MCF 10A (cell line): ENCODE measurements at regions of chr1 and their contacts with region 1.

Region 1: GRCh38 chr1:244272471-244273261 is 179.0 kb downstream of the ADSS2 start:
- DNase-seq: peak; percentile 97
- H3K4me3 Mint-ChIP-seq: peak overlapping the region; percentile 65
- H3K27ac Mint-ChIP-seq: peak overlapping the region; percentile 52
- H3K4me1 Mint-ChIP-seq: peaks cover 32% of the 10 kb centered on the region
- H3K27me3 Mint-ChIP-seq: no peaks in the 10 kb centered on the region
- CTCF ChIP-seq: peak; percentile 100

Region 2: GRCh38 chr1:243343970-243344937 is 928.4 kb before region 1 on chr1:
- CTCF ChIA-PET with region 1: interaction called, 86 read pairs
- POLR2A ChIA-PET with region 1: interaction called, 5 read pairs
- intact Hi-C with region 1: loop called (anchors 1 kb)
- DNase-seq: peak; percentile 79
- H3K4me3 Mint-ChIP-seq: no peak overlapping the region
- H3K27ac Mint-ChIP-seq: no peak overlapping the region
- H3K4me1 Mint-ChIP-seq: peaks cover 5% of the 10 kb centered on the region
- H3K27me3 Mint-ChIP-seq: no peaks in the 10 kb centered on the region
- CTCF ChIP-seq: peak; percentile 91

Region 3: GRCh38 chr1:243713470-243714186 is 559.0 kb before region 1 on chr1:
- CTCF ChIA-PET with region 1: interaction called, 75 read pairs
- POLR2A ChIA-PET with region 1: interaction called, 4 read pairs
- intact Hi-C with region 1: loop called (anchors 1 kb)
- DNase-seq: no peak
- H3K4me3 Mint-ChIP-seq: no peak overlapping the region
- H3K27ac Mint-ChIP-seq: no peak overlapping the region
- H3K4me1 Mint-ChIP-seq: peaks cover 6% of the 10 kb centered on the region
- H3K27me3 Mint-ChIP-seq: no peaks in the 10 kb centered on the region
- CTCF ChIP-seq: no peak

Region 4: GRCh38 chr1:243850452-243851256 is 422.0 kb before region 1 on chr1:
- CTCF ChIA-PET with region 1: interaction called, 6 read pairs
- POLR2A ChIA-PET with region 1: interaction called, 6 read pairs
- intact Hi-C with region 1: loop called (anchors 1 kb)
- DNase-seq: peak; percentile 85
- H3K4me3 Mint-ChIP-seq: peak overlapping the region; percentile 88
- H3K27ac Mint-ChIP-seq: peak overlapping the region; percentile 46
- H3K4me1 Mint-ChIP-seq: peaks cover 20% of the 10 kb centered on the region
- H3K27me3 Mint-ChIP-seq: peaks cover 64% of the 10 kb centered on the region
- CTCF ChIP-seq: no peak

Region 5: DNA sequence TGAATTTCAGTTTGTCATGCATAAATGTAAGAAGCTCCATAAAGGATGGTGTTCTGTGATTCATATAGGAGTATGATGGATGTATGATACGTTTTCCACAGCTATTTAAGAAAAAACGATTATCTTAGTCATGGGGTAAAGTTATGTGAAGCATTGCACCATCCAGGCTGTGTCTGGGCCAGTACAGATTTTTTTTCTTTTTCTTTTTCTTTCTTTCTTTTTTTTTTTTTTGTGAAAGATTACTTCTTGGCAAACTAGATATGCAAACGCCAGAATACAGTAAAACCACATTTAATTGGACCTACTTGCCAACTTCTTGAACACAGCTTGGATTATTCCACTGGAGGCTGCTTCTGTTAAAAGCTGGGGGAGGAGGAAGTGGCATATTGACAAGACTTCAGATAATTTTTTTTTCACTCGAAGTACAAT is 206.7 kb before region 1 on chr1:
- CTCF ChIA-PET with region 1: interaction called, 10 read pairs
- POLR2A ChIA-PET with region 1: no interaction called
- intact Hi-C with region 1: no loop called
- DNase-seq: peak; percentile 45
- H3K4me3 Mint-ChIP-seq: no peak overlapping the region
- H3K27ac Mint-ChIP-seq: no peak overlapping the region
- H3K4me1 Mint-ChIP-seq: peaks cover 5% of the 10 kb centered on the region
- H3K27me3 Mint-ChIP-seq: no peaks in the 10 kb centered on the region
- CTCF ChIP-seq: no peak

Region 6: DNA sequence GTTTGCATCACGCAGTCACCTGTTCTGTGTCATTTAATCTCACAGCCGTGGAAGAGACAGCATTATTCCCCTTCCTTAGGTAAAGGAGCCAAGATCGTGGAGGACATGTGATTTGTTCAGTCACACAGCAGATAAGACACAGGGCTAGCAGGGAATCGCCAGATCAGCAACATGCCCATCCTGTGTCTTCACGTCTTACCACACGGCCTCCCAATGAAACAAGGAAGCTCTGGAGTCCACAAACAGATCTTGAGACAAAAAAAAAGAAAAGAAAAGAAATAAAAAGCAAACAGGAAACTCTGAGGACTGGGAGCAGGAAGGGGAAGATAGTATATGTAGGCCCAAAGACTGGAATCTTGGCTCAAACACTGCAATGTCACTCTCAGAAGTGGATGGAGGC is 23.8 kb after region 1 on chr1:
- CTCF ChIA-PET with region 1: interaction called, 28 read pairs
- POLR2A ChIA-PET with region 1: interaction called, 11 read pairs
- intact Hi-C with region 1: loop called (anchors 1 kb)
- DNase-seq: no peak
- H3K4me3 Mint-ChIP-seq: no peak overlapping the region
- H3K27ac Mint-ChIP-seq: peak overlapping the region; percentile 36
- H3K4me1 Mint-ChIP-seq: peaks cover 8% of the 10 kb centered on the region
- H3K27me3 Mint-ChIP-seq: no peaks in the 10 kb centered on the region
- CTCF ChIP-seq: no peak

Region 7: DNA sequence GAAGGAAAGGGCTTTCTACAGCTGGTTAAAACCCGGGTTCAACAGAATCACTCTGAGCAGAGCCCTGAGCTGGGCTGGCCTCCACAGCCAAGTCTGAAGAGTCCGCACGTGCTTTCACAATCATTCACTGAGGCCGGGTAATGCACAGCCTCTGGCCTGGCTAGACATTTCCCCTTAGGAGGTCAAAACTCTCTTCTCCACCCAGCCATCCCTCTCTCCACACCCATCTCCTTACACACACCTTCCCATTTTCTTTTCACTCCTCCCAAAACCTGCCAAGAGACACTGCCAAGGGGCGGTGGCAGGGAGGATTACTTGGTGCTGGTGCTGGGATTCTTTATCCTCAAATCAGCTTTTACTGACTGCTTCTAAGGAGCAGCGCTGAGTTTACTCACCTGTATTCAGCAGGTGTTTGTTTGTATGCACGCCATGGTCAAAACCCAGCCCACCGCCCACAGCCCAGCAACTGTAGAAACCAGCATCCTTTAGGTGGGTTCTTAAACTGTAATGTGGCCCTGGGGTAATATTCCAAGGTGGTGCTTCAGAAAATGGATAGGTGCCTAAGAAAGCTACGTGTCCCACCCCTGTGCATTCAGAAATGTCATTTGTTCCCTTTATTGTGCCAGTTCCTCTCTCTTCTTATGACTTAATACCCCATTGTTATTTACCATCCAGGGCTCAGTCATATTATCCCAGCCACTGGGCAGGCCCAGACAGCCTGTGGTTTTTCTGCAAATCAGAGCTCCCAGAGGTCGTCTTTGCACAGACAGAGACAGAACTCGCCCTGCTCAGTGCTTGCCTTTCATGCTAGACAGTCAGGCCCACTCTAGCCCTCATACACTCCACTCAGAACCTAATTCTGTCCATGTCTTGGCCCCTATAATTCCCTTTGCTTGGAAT is 98.8 kb after region 1 on chr1:
- CTCF ChIA-PET with region 1: no interaction called
- POLR2A ChIA-PET with region 1: no interaction called
- intact Hi-C with region 1: no loop called
- DNase-seq: peak; percentile 77
- H3K4me3 Mint-ChIP-seq: no peak overlapping the region
- H3K27ac Mint-ChIP-seq: peak overlapping the region; percentile 9
- H3K4me1 Mint-ChIP-seq: peaks cover 29% of the 10 kb centered on the region
- H3K27me3 Mint-ChIP-seq: no peaks in the 10 kb centered on the region
- CTCF ChIP-seq: no peak

Region 8: GRCh38 chr1:244424649-244425334 is 152.1 kb after region 1 on chr1:
- CTCF ChIA-PET with region 1: no interaction called
- POLR2A ChIA-PET with region 1: no interaction called
- intact Hi-C with region 1: no loop called
- DNase-seq: no peak
- H3K4me3 Mint-ChIP-seq: no peak overlapping the region
- H3K27ac Mint-ChIP-seq: peak overlapping the region; percentile 17
- H3K4me1 Mint-ChIP-seq: peaks cover 5% of the 10 kb centered on the region
- H3K27me3 Mint-ChIP-seq: no peaks in the 10 kb centered on the region
- CTCF ChIP-seq: no peak

Region 9: GRCh38 chr1:244451951-244452795 is 179.5 kb after region 1 on chr1:
- CTCF ChIA-PET with region 1: no interaction called
- POLR2A ChIA-PET with region 1: interaction called, 3 read pairs
- intact Hi-C with region 1: loop called (anchors 1 kb)
- DNase-seq: peak; percentile 100
- H3K4me3 Mint-ChIP-seq: peak overlapping the region; percentile 70
- H3K27ac Mint-ChIP-seq: peak overlapping the region; percentile 66
- H3K4me1 Mint-ChIP-seq: peaks cover 39% of the 10 kb centered on the region
- H3K27me3 Mint-ChIP-seq: no peaks in the 10 kb centered on the region
- CTCF ChIP-seq: peak; percentile 45

Region 10: GRCh38 chr1:244945109-244945671 is 672.5 kb after region 1 on chr1:
- CTCF ChIA-PET with region 1: no interaction called
- POLR2A ChIA-PET with region 1: no interaction called
- intact Hi-C with region 1: no loop called
- DNase-seq: no peak
- H3K4me3 Mint-ChIP-seq: no peak overlapping the region
- H3K27ac Mint-ChIP-seq: no peak overlapping the region
- H3K4me1 Mint-ChIP-seq: no peaks in the 10 kb centered on the region
- H3K27me3 Mint-ChIP-seq: no peaks in the 10 kb centered on the region
- CTCF ChIP-seq: no peak